A673 (cell line): ENCODE measurements at regions of chr7 and their contacts with region 1.

Region 1: GRCh38 chr7:153616711-153617325 is 435.4 kb upstream of the DPP6 start:
- DNase-seq: no peak
- H3K4me3 ChIP-seq: no peak overlapping the region
- H3K27ac ChIP-seq: no peak overlapping the region
- H3K4me1 ChIP-seq: no peaks in the 10 kb centered on the region
- H3K27me3 ChIP-seq: no peaks in the 10 kb centered on the region
- CTCF ChIP-seq: no peak

Region 2: DNA sequence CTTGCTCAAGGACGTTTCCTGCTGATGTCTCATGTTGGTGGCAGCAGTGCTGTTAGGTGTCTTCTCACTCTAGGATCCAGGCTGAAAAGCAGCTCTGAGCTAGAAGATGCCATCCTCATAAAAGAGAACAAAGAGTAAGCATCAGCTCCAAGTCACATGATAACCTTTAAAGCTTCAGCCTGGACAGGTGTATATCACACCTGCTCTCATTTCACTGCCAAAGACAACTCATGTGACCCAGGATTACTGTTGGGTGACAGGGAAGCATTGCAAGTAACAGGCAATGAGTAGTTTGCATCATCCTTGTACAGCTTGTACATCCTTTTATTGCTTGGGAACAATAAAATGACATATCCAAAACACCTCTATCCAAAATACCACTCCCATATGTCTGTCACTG is 12.0 kb after region 1 on chr7:
- CTCF ChIA-PET with region 1: no interaction called
- POLR2A ChIA-PET with region 1: no interaction called
- intact Hi-C with region 1: loop called (anchors 1 kb)
- DNase-seq: no peak
- H3K4me3 ChIP-seq: no peak overlapping the region
- H3K27ac ChIP-seq: no peak overlapping the region
- H3K4me1 ChIP-seq: no peaks in the 10 kb centered on the region
- H3K27me3 ChIP-seq: no peaks in the 10 kb centered on the region
- CTCF ChIP-seq: no peak